ENCODE measurements at regions of chr12 and their contacts with region 1.

Region 1: GRCh38 chr12:132986001-132986912 is at the start of gene ZNF26:
- DNase-seq: peak; percentile 92
- H3K4me3 ChIP-seq: peak within 1 kb of the TSS; percentile 72 to 81
- H3K27ac ChIP-seq: peak within 1 kb of the TSS; percentile 79 to 82
- H3K4me1 ChIP-seq: no peaks in the 10 kb centered on the region
- H3K27me3 ChIP-seq: no peaks in the 10 kb centered on the region
- CTCF ChIP-seq: peak in 2 of 4 experiments; percentile 17 to 19
- POLR2A ChIP-seq: peak; percentile 17
- total RNA-seq, gene ZNF26: 14.2 to 17.0 TPM

Region 2: GRCh38 chr12:133037207-133038005 is 51.1 kb after region 1 on chr12 and contains the start of gene ZNF84:
- intact Hi-C with region 1: loop called (anchors 5 kb)
- DNase-seq: peak; percentile 96
- H3K4me3 ChIP-seq: peak within 1 kb of the TSS; percentile 78 to 92
- H3K27ac ChIP-seq: peak within 1 kb of the TSS; percentile 94 to 96
- H3K4me1 ChIP-seq: no peaks in the 10 kb centered on the region
- H3K27me3 ChIP-seq: no peaks in the 10 kb centered on the region
- CTCF ChIP-seq: peak in 1 of 4 experiments; percentile 17
- POLR2A ChIP-seq: peak; percentile 71
- total RNA-seq, gene ZNF84: 22.2 to 52.0 TPM

Region 3: GRCh38 chr12:133080368-133081158 is 94.3 kb after region 1 on chr12 and contains the start of gene ZNF140:
- intact Hi-C with region 1: loop called (anchors 5 kb)
- DNase-seq: peak; percentile 96
- H3K4me3 ChIP-seq: peak within 1 kb of the TSS; percentile 68 to 86
- H3K27ac ChIP-seq: peak within 1 kb of the TSS; percentile 97 to 98
- H3K4me1 ChIP-seq: no peaks in the 10 kb centered on the region
- H3K27me3 ChIP-seq: no peaks in the 10 kb centered on the region
- CTCF ChIP-seq: peak in 3 of 4 experiments; percentile 4 to 66 (median 53)
- POLR2A ChIP-seq: peak; percentile 54
- total RNA-seq, gene ZNF140: 18.2 to 23.7 TPM

Measured in prostate gland (tissue), 2 donors.